Left cardiac atrium (tissue), 4 donors: ENCODE measurements at regions of chr5 and their contacts with region 1.

Region 1: DNA sequence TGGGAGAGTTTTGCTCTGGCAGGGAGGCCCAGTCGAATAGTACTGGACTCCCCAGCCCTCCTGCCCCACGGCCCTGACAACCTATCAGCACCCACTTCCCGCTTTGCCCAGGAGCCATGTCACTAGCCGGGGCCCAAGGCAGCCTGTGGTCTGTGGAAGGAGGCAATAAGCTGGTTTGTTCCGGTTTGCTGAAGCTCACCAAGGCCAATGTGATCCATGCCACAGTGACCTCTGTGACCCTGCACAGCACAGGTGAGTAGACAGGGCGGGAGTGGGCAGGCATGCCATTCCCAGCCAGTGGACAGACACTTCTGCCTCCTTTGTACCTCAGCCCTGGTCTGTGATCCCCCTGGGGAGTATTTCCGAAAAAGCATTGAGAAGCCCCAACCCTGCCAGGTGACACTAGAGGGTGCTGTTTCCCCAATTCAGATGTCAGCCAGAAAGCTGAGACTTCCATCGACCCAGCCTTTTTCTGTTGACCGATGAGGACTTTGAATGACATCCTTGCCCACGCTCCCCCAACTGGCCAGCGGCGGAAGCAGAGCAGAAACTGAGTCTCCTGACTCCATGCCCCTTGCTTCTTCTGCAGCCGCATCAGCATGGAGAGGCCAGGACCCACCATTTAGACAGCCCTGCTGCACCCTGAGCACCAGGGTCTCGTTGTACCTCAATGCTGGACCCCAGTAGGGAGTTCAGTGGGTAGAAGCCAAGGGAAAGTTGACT is 9.6 kb downstream of the PCYOX1L start:
- DNase-seq: peak; percentile 62
- ATAC-seq: peak; percentile 50 to 61

Region 2: GRCh38 chr5:149094981-149095380 is 272.4 kb before region 1 on chr5:
- intact Hi-C with region 1: no loop called
- DNase-seq: no peak
- ATAC-seq: no peak

Region 3: DNA sequence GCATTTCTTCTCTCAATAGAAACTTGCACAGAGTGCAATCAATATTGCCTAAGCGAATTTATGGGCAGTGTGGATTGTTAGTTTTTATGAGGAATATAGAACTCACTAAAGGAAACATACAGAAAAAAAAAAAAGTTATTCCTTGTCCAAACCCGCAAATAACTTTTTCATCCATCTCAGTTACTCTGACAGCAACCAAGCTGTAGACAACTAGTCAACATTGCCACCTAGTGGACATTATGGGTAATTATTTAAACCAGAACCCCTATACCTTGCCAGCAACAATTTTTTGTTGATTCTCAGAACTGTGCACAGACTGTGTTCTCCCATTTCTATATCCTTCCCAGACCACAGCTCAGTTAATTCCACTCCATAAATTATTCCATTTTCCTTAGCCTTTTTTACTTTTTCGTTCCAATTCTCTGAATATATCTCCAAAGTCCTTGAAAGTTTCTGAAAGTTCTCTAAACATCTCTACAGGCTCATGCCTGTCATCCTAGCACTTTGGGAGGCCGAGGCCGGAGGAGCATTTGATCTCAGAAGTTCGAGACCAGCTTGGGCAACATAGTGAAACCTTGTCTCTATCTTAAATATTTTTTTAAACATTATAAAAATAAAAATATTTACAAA is 98.4 kb before region 1 on chr5:
- intact Hi-C with region 1: loop called (anchors 5 kb)
- DNase-seq: no peak
- ATAC-seq: no peak

Region 4: GRCh38 chr5:149298842-149299404 is 68.5 kb before region 1 on chr5:
- intact Hi-C with region 1: no loop called
- DNase-seq: peak; percentile 55
- ATAC-seq: peak; percentile 15 to 48

Region 5: GRCh38 chr5:149317281-149318048 is 49.9 kb before region 1 on chr5:
- intact Hi-C with region 1: loop called in 1 of 2 experiments (anchors 5 kb)
- DNase-seq: no peak
- ATAC-seq: no peak

Region 6: GRCh38 chr5:149387081-149387631 is 19.7 kb after region 1 on chr5:
- intact Hi-C with region 1: no loop called
- DNase-seq: peak; percentile 51
- ATAC-seq: peak; percentile 32 to 45

Region 7: DNA sequence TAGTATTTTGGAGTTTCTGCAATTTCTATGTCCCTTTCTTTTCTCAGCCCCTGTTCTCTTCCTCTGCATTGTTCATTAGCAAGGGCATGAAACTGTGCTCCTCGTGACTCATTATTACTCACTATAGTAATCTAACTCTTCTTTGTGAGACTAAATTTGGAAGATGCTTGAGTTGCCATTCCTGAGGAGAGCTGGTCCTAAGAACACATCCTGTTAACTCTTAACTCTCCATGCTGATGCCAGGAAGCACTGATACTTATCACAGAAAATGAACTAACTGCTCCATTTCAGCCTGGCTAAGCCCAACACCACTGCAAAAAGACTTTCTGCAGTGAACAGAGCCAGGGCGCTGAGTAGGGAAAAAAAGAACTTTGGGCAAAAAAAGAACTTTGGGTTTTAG is 194.4 kb after region 1 on chr5:
- intact Hi-C with region 1: loop called in 1 of 2 experiments (anchors 5 kb)
- DNase-seq: no peak
- ATAC-seq: peak; percentile 87 to 95